ENCODE measurements at regions of chr9 and their contacts with region 1.

Region 1: DNA sequence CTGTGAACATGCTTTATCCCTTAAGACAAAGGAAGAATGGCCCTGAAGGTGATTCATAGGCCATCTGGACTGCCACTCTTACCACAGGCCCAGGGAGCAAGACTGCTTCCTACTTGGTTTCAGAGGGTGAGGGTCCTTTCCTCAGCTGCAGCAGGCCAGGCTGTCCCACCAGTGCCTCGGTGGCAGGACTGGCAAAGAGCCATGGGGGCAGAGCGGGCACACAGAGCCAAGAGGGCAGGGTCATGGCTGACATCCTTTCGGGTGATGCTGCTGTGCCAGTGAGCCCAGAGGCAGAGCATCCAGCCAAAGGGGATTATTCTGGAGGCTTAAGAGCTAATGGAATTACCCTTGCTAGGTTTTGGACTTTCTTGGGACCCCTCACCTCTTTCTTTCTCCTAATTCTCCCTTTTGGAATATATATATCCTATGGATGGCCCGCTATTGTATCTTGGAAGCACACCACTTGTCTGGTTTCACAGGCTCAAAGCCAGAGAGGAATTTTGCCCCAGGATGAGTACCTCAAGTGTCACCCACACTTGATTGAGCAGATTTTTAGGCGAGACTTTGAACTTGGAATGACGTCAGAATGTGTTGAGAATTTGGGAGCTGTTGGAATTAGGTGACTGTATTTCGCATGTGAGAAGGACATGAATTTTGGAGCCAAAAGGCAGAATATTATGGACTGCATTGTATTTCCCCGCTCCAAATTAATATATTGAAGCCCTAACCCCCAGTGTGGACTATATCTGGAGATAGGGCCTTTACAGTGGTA is 180.6 kb downstream of the BARX1 start:
- DNase-seq: no peak
- ATAC-seq: no peak

Region 2: GRCh38 chr9:93713716-93714115 is 60.8 kb before region 1 on chr9:
- intact Hi-C with region 1: loop called in 1 of 2 experiments (anchors 5 kb)
- DNase-seq: no peak
- ATAC-seq: no peak

Measured in left colon (tissue), 2 donors.